Common myeloid progenitor, CD34-positive (primary cell): ENCODE measurements at regions of chr3 and their contacts with region 1.

Region 1: GRCh38 chr3:4880850-4881249 is 98.4 kb upstream of the BHLHE40 start:
- DNase-seq: no peak
- H3K4me3 ChIP-seq: no peak overlapping the region
- H3K27ac ChIP-seq: no peak overlapping the region
- H3K4me1 ChIP-seq: no peaks in the 10 kb centered on the region
- H3K27me3 ChIP-seq: no peaks in the 10 kb centered on the region

Region 2: DNA sequence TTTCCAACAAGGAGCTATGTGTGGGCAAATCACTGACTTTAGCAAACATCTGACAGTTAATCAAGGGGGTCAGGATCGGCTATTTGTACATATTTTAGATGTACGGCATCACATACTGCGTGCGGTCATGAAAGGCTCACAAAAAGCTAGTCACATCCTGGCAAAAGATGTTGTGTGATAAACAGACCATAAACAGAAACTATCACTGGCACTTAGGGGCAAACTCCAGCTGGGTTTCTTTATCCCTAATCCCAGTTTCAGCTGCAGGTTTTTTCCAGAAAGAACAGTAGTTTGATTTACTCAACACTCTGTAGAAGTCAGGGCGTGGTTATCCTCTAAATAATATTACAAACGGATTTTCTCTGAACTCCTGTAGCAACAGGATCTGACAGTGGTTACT is 14.0 kb before region 1 on chr3:
- CTCF ChIA-PET with region 1: interaction called, 22 read pairs
- POLR2A ChIA-PET with region 1: no interaction called
- DNase-seq: peak in 1 of 3 donors; percentile 36
- H3K4me3 ChIP-seq: no peak overlapping the region
- H3K27ac ChIP-seq: peak overlapping the region in 1 of 2 experiments; percentile 85
- H3K4me1 ChIP-seq: peaks cover 6 to 25% (median 19%) of the 10 kb centered on the region in 4 experiments
- H3K27me3 ChIP-seq: no peaks in the 10 kb centered on the region

Region 3: DNA sequence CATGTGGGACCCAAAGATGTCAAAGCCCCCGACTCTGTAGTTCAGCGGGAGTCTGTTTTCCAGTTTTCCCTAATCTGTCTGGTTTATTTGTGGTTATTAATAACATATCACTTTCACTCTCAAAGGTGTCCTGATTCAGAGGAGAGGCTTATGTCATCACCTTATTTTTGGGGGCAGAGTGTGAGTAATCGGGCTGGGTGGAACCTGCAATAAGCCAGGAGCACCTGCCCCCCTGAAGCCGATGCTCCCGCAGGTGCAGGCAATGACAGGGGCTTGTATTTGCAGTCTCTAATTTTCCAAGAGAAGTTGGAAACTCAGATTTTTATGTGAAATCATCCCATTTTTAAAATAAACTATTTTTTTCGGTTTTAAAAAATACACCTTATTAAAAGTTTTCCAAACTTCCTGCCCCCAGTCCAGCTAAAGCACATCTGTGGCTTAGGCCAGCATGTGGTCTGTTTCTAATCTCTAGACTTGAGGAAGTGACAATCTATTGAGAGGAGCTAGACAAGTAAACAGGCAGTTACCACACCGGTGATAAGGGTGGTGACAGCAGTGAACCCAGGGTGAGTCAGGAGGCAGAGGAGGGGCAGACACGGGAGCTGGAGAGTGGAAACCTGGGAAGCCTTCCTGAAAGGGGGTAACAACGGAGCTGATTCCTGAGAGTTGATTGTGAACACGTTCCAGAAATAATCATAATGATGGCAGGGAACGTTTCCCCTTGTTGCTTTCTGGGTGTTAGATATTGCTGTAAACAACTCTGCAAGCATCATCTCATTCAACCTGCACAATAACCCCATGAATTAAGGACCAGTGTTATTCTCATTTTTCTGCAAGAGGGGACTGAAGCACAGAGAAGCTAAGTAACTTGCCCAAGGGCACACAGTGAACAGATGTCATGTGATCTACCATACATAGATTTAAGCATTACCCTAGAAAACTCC is 135.6 kb after region 1 on chr3:
- CTCF ChIA-PET with region 1: no interaction called
- POLR2A ChIA-PET with region 1: no interaction called
- DNase-seq: peak; percentile 60 to 89 (median 78)
- H3K4me3 ChIP-seq: peak overlapping the region in 3 of 7 experiments; percentile 19 to 39 (median 34)
- H3K27ac ChIP-seq: peak overlapping the region in 1 of 2 experiments; percentile 7
- H3K4me1 ChIP-seq: peaks cover 31 to 88% (median 76%) of the 10 kb centered on the region in 4 experiments
- H3K27me3 ChIP-seq: no peaks in the 10 kb centered on the region

Region 4: GRCh38 chr3:5151586-5151985 is 270.7 kb after region 1 on chr3:
- CTCF ChIA-PET with region 1: no interaction called
- POLR2A ChIA-PET with region 1: no interaction called
- DNase-seq: no peak
- H3K4me3 ChIP-seq: no peak overlapping the region
- H3K27ac ChIP-seq: no peak overlapping the region
- H3K4me1 ChIP-seq: no peaks in the 10 kb centered on the region
- H3K27me3 ChIP-seq: no peaks in the 10 kb centered on the region